ENCODE measurements at regions of chr9 and their contacts with region 1.

Region 1: GRCh38 chr9:37079370-37080164 is 40.8 kb upstream of the ZCCHC7 start:
- DNase-seq: peak; percentile 90

Region 2: GRCh38 chr9:37119907-37120842 is 40.6 kb after region 1 on chr9 and contains the start of gene ZCCHC7:
- CTCF ChIA-PET with region 1: no interaction called
- POLR2A ChIA-PET with region 1: interaction called, 11 read pairs
- DNase-seq: peak; percentile 95